K562 (cell line): ENCODE measurements at regions of chr10 and their contacts with region 1.

Region 1: GRCh38 chr10:80699602-80700039 is 161.9 kb downstream of the SH2D4B start:
- DNase-seq: peak; percentile 86 to 92 (median 88)
- ATAC-seq: peak; percentile 97
- H3K4me3 ChIP-seq: no peak overlapping the region
- H3K27ac ChIP-seq: no peak overlapping the region
- H3K4me1 ChIP-seq: peaks cover 3 to 4% of the 10 kb centered on the region in 2 experiments; a peak in 3 of 5 replicates
- H3K27me3 ChIP-seq: peaks cover 0 to 18% of the 10 kb centered on the region in 2 experiments; a peak in 2 of 5 replicates
- CTCF ChIP-seq: peak; percentile 98
- EP300 ChIP-seq: no peak
- POLR2A ChIP-seq: no peak
- RAD21 ChIP-seq: peak; percentile 99

Region 2: GRCh38 chr10:80382989-80383388 is 316.6 kb before region 1 on chr10:
- CTCF ChIA-PET with region 1: no interaction called
- POLR2A ChIA-PET with region 1: no interaction called
- in situ Hi-C with region 1: no loop called
- intact Hi-C with region 1: loop called (anchors 5 kb)
- DNase-seq: peak in 2 of 4 experiments; percentile 57
- ATAC-seq: peak; percentile 48
- H3K4me3 ChIP-seq: no peak overlapping the region
- H3K27ac ChIP-seq: no peak overlapping the region
- H3K4me1 ChIP-seq: no peaks in the 10 kb centered on the region
- H3K27me3 ChIP-seq: peaks cover 5% of the 10 kb centered on the region in 2 experiments; a peak in 4 of 5 replicates
- CTCF ChIP-seq: peak; percentile 66 to 90 (median 79)
- EP300 ChIP-seq: no peak
- POLR2A ChIP-seq: no peak
- RAD21 ChIP-seq: peak; percentile 82

Region 3: DNA sequence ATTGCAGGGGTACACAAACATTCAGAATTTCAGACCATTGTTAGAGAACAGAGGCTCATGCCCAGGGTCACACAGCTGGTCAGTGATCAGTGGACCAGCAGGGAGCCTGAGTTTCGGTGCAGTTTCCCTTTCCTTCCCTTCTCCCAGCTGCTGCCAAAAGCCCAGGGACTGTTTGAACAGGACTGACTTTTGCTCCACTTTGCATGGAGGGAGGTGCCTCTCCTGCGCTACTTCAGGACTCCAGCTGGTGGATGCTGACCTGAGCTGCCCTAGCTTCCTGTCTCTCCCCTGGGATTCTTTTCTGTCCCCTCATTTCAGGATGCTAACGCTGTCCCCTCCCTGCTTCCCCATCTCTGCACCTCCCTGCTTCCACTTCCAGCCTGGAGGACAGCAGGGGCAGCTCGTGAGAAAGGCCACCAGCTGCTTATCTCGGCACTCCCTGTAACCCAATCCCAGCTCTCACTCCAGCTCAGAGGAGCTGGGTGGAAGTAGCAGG is 147.4 kb before region 1 on chr10:
- CTCF ChIA-PET with region 1: no interaction called
- POLR2A ChIA-PET with region 1: no interaction called
- in situ Hi-C with region 1: no loop called
- intact Hi-C with region 1: no loop called
- DNase-seq: no peak
- ATAC-seq: peak; percentile 56
- H3K4me3 ChIP-seq: no peak overlapping the region
- H3K27ac ChIP-seq: no peak overlapping the region
- H3K4me1 ChIP-seq: no peaks in the 10 kb centered on the region
- H3K27me3 ChIP-seq: peaks cover 25 to 47% of the 10 kb centered on the region in 2 experiments
- CTCF ChIP-seq: no peak
- EP300 ChIP-seq: no peak
- POLR2A ChIP-seq: no peak
- RAD21 ChIP-seq: no peak

Region 4: DNA sequence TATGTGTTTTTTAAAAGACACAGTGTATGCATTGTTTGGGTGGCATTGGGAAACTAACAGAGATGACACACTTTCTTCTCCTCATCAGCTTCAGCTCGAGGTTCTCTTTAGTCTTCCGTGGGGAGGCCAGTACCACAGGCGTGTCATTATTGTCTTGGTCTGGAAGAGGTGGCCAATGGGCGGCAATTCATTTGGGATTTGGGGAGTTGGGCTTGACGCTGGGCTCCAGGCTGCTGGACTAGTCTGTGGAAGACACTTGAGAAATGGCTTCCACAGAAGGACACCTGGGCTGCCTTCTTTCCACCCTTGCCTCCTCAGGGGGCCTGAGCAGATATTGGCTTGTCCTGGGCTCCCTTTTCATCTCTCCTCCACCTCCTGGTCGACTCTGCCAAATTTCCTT is 30.3 kb after region 1 on chr10:
- CTCF ChIA-PET with region 1: no interaction called
- POLR2A ChIA-PET with region 1: no interaction called
- in situ Hi-C with region 1: no loop called
- intact Hi-C with region 1: no loop called
- DNase-seq: no peak
- ATAC-seq: no peak
- H3K4me3 ChIP-seq: no peak overlapping the region
- H3K27ac ChIP-seq: no peak overlapping the region
- H3K4me1 ChIP-seq: peaks cover 0 to 8% of the 10 kb centered on the region in 2 experiments; a peak in 3 of 5 replicates
- H3K27me3 ChIP-seq: no peaks in the 10 kb centered on the region
- CTCF ChIP-seq: no peak
- EP300 ChIP-seq: no peak
- POLR2A ChIP-seq: no peak
- RAD21 ChIP-seq: no peak

Region 5: DNA sequence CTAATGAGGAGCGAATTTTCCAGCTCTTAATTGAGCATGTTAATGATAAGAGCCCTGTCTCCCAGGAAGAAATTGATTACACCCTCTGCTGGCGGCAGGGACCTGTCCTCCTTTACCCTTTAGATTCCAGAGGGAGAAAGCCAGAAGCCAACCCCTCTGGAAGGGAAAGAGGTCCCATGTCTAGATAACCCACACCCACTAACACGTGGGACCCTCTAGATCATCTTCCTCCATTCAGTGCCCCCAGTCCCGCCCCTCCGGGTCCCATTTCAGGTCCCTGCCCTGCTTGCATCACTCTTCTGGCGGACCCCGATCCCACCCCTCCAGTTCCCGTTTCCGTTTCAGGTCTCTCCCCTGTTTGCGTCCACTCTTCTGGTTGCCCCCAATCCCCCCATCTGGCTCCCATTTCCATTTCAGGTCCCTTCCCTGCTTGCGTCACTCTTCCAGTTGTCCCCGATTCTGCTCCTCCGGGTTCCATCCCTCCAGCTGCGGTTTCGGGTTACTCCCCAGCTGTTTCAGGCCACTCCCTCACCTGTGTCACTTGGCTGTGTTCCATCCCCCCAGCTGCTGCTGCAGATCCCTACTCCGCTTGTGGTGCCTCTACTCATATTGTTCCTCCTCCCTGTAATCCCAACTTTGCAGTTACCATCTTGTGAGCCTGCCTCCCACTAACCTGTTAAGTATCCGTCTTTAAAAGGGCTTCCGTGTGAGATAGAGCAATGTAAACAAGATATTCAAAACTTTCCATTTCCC is 40.5 kb after region 1 on chr10:
- CTCF ChIA-PET with region 1: interaction called, 5 read pairs
- POLR2A ChIA-PET with region 1: no interaction called
- in situ Hi-C with region 1: no loop called
- intact Hi-C with region 1: loop called (anchors 1 kb)
- DNase-seq: peak; percentile 38 to 85 (median 64)
- ATAC-seq: peak; percentile 85
- H3K4me3 ChIP-seq: peak overlapping the region; percentile 3; the same call in 1 of the 2 replicates
- H3K27ac ChIP-seq: no peak overlapping the region
- H3K4me1 ChIP-seq: peaks cover 11 to 28% of the 10 kb centered on the region in 2 experiments
- H3K27me3 ChIP-seq: no peaks in the 10 kb centered on the region
- CTCF ChIP-seq: no peak
- EP300 ChIP-seq: 0 out of 2 replicates have a peak, but pooled peaks have one; percentile 18
- POLR2A ChIP-seq: no peak
- RAD21 ChIP-seq: no peak

Region 6: GRCh38 chr10:80769700-80770160 is 70.1 kb after region 1 on chr10:
- CTCF ChIA-PET with region 1: no interaction called
- POLR2A ChIA-PET with region 1: no interaction called
- in situ Hi-C with region 1: no loop called
- intact Hi-C with region 1: loop called (anchors 2 kb)
- DNase-seq: peak in 2 of 4 experiments; percentile 41 to 57
- ATAC-seq: peak; percentile 61
- H3K4me3 ChIP-seq: no peak overlapping the region
- H3K27ac ChIP-seq: peak overlapping the region; percentile 51
- H3K4me1 ChIP-seq: peaks cover 19 to 52% of the 10 kb centered on the region in 2 experiments
- H3K27me3 ChIP-seq: no peaks in the 10 kb centered on the region
- CTCF ChIP-seq: no peak
- EP300 ChIP-seq: peak; percentile 74
- POLR2A ChIP-seq: no peak
- RAD21 ChIP-seq: peak in 1 of 2 experiments; percentile 16; a peak in 2 of 4 replicates

Region 7: GRCh38 chr10:80861882-80862281 is 162.3 kb after region 1 on chr10:
- CTCF ChIA-PET with region 1: interaction called, 17 read pairs
- POLR2A ChIA-PET with region 1: interaction called, 5 read pairs
- in situ Hi-C with region 1: loop called (anchors 5 kb)
- intact Hi-C with region 1: loop called (anchors 1 kb)
- DNase-seq: peak; percentile 20 to 43 (median 30)
- ATAC-seq: peak; percentile 84
- H3K4me3 ChIP-seq: no peak overlapping the region
- H3K27ac ChIP-seq: no peak overlapping the region
- H3K4me1 ChIP-seq: no peaks in the 10 kb centered on the region
- H3K27me3 ChIP-seq: peaks cover 0 to 4% of the 10 kb centered on the region in 2 experiments; a peak in 3 of 5 replicates
- CTCF ChIP-seq: peak; percentile 57 to 82 (median 60); a peak in 4 of 6 replicates
- EP300 ChIP-seq: no peak
- POLR2A ChIP-seq: no peak
- RAD21 ChIP-seq: peak; percentile 81 to 90

Region 8: DNA sequence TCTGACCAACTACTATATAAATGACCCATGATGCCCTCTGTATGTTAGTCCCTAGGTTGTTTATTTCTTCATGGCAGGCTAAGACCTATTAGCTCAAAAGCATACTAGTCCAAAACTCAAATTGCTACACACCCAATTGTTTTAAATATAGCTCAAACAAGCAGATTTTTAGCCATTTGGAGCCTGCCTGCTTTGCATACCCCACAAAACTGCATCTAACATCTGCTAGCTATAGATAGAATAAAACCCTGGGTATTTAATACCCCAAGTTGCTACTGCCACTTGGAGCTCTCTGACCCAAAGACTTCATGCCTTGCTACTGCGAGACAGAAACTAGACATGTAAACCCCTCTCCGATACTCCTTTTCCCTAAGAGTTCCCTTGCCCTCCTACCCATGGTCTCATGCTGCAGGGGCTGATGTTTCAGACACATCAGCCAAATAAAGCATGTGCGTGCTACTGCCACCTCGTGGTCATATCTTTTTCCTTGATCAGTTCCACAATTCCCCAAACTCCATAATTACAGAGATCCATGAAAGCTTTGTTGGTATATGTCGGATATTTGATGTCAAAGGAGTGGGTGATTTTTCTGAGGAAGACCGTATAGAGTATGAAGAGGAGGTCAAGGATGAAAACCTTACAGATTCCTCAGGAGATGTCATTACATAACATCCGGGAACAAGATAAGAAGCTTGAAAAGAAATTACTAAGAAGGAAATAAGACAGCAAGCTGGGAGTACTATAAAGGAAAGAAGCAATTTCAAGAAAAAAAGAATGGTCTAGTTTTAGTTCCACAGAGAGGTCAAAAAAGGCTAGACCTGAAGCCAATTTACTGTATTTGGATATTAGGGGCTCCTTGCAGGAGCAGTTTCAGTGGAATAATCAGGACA is 224.7 kb after region 1 on chr10:
- CTCF ChIA-PET with region 1: interaction called, 8 read pairs
- POLR2A ChIA-PET with region 1: no interaction called
- in situ Hi-C with region 1: loop called (anchors 10 kb)
- intact Hi-C with region 1: loop called (anchors 1 kb)
- DNase-seq: peak; percentile 34 to 72 (median 49)
- ATAC-seq: peak; percentile 93
- H3K4me3 ChIP-seq: no peak overlapping the region
- H3K27ac ChIP-seq: no peak overlapping the region
- H3K4me1 ChIP-seq: no peaks in the 10 kb centered on the region
- H3K27me3 ChIP-seq: no peaks in the 10 kb centered on the region
- CTCF ChIP-seq: peak; percentile 67 to 74 (median 70)
- EP300 ChIP-seq: no peak
- POLR2A ChIP-seq: no peak
- RAD21 ChIP-seq: peak; percentile 60 to 73

Region 9: GRCh38 chr10:81018708-81019365 is 319.2 kb after region 1 on chr10:
- CTCF ChIA-PET with region 1: interaction called, 7 read pairs
- POLR2A ChIA-PET with region 1: no interaction called
- in situ Hi-C with region 1: no loop called
- intact Hi-C with region 1: loop called (anchors 2 kb)
- DNase-seq: peak in 2 of 4 experiments; percentile 17 to 50
- ATAC-seq: peak; percentile 90
- H3K4me3 ChIP-seq: no peak overlapping the region
- H3K27ac ChIP-seq: no peak overlapping the region
- H3K4me1 ChIP-seq: no peaks in the 10 kb centered on the region
- H3K27me3 ChIP-seq: no peaks in the 10 kb centered on the region
- CTCF ChIP-seq: peak; percentile 57 to 73 (median 64)
- EP300 ChIP-seq: no peak
- POLR2A ChIP-seq: no peak
- RAD21 ChIP-seq: peak; percentile 18 to 47; a peak in 2 of 4 replicates